PC-3 (cell line): ENCODE measurements at regions of chr12 and their contacts with region 1.

Region 1: DNA sequence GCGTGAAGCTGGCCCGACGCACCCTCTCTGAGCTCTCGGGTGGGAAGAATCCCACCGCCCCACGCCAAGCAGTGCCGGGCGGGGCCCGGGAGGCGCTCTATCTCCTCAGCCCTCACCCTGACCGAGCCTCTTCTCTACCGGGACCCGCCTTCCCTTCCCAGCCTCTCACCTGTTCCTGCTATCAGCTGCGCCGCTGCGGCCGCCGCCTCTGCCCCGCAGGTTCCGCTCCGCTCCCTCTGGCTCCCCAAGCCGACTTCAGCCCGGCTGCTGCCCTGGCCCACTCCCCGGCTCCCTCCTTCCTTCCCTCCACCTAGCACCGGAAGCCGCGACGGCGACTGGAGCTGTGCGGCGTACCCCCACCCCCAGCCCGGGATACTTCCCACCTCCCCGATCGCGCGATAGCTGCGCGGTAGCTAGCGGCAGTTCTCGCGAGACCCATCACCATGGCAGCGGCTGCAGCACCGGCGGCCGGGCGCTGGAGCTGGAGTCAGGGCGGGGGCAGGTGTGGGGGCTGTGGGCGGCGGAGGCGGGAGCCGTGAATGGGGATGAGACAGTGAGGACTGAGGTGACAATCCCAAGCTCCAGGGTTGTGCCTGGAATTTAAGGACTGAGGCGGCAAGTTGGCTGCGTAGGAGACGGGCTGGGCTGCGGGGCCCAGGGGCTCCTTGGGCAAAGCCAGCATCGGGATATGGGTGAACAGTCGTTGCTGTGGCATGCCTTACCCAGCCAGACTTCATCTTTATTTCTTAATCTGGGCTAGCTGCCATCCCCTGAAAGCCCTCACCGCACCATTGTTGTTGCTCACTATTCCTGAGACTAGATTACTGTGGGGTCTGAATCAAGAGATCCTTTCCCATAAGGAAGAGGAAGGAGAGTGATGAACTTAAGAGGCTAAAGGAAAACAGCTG is at the start of gene ARF3:
- DNase-seq: peak; percentile 96
- ATAC-seq: peak; percentile 85
- H3K4me3 ChIP-seq: peak within 1 kb of the TSS; percentile 96
- H3K27ac ChIP-seq: peak within 1 kb of the TSS; percentile 61
- H3K4me1 ChIP-seq: peaks cover 29% of the 10 kb centered on the region
- H3K27me3 ChIP-seq: no peaks in the 10 kb centered on the region
- CTCF ChIP-seq: no peak
- total RNA-seq, gene ARF3: 85.5 and 93.0 TPM in 2 replicates

Region 2: DNA sequence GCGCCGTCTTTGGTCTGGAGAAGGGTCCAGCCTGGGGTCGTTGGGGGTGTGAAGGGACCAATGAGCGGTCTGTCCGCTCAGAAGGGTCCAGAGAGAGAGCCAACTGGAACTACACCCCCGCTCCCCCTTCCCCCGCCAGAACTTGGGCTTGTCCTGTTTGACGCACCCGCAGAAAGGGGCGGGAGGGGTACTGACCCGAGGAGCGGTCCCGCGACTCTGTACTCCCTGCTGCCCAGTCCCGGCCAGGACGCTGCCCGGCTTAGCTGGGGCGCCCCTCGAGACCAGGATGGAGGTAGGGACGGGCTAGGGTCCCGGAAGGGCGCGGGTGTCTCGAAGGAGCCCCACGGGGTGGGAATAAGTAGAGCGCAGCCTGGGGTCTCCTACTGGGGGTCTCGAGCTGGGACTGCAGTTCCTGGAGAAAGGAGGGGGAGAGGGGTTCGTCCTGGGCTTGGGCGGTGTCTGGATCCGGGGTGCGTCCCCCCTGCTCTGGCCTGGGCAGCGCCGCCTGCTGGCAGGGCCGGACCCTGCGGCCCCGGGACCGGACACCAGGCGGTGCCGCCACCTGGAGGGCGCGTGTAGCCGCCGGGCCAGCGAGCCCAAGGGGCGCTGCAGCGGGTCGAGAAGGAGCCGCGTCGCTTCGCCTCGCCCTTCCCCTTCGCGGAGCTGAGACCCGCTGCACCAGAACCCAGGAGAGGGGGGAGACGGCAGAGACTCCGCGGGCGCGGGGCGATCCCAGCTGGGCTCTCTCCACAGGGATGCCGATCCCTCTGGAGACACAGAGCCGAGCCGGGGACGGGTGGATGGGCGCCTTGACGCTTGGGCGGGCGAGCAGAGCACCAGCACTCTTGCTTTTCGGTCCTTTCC is 142.9 kb before region 1 on chr12:
- CTCF ChIA-PET with region 1: no interaction called
- POLR2A ChIA-PET with region 1: interaction called, 10 read pairs
- intact Hi-C with region 1: no loop called
- DNase-seq: peak; percentile 82
- ATAC-seq: peak; percentile 64
- H3K4me3 ChIP-seq: peak overlapping the region; percentile 86
- H3K27ac ChIP-seq: peak overlapping the region; percentile 30; the same call in 1 of the 2 replicates
- H3K4me1 ChIP-seq: peaks cover 36% of the 10 kb centered on the region
- H3K27me3 ChIP-seq: no peaks in the 10 kb centered on the region
- CTCF ChIP-seq: peak; percentile 99